WTC11 (cell line): ENCODE measurements at regions of chr7 and their contacts with region 1.

Region 1: GRCh38 chr7:149422129-149422913 is 38.5 kb downstream of the ZNF777 start:
- DNase-seq: peak; percentile 86
- ATAC-seq: peak; percentile 96
- H3K4me3 Mint-ChIP-seq: peak overlapping the region; percentile 79
- H3K27ac Mint-ChIP-seq: peak overlapping the region; percentile 89
- H3K4me1 Mint-ChIP-seq: peaks cover 11% of the 10 kb centered on the region
- H3K27me3 Mint-ChIP-seq: peaks cover 14% of the 10 kb centered on the region
- CTCF ChIP-seq: peak; percentile 44; the same call in 1 of the 2 replicates

Region 2: DNA sequence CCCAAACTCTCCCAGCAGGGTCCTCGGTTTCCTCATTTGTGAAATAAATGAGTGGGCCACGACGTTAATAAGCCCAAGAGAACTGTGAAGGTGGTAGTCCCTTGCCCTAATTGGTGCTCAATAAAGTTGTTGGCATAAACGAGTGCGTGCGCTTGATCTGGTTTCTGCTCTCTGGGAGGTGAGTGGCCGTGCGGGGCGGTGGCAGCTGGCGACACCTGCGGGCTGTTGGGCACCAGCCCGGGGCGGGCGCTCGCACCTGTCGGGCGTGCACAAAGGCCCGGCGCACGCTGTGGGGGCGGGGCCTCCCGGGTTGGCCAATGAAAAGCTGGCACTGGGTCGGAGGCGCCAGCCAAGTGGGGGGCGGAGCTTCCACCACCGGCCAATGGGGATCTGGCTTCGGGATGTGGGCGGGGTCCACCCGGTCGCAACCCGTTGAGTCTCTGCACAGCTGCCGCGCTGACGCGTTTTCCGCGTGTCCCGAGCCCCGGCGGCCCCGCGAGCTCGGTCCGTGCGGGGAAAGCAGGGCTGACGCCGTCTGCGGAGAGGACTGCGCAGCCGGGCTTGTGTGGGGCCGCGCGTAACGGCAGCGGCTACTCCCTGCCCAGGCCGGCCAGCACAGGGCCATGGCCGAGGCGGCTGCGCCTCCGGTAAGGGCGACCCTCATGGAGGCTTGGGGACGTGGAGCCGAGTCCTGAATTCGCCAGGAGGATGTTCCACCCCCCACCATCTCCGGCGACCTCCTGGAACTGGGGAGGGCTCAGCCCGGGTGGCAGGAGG is 137.3 kb before region 1 on chr7:
- CTCF ChIA-PET with region 1: interaction called, 11 read pairs
- POLR2A ChIA-PET with region 1: no interaction called
- DNase-seq: peak; percentile 99
- ATAC-seq: peak; percentile 96
- H3K4me3 Mint-ChIP-seq: peak overlapping the region; percentile 98
- H3K27ac Mint-ChIP-seq: peak overlapping the region; percentile 70; the same call in 1 of the 2 replicates
- H3K4me1 Mint-ChIP-seq: peaks cover 17% of the 10 kb centered on the region
- H3K27me3 Mint-ChIP-seq: peaks cover 27% of the 10 kb centered on the region
- CTCF ChIP-seq: no peak

Region 3: GRCh38 chr7:149409895-149410294 is 12.4 kb before region 1 on chr7:
- CTCF ChIA-PET with region 1: interaction called, 10 read pairs
- POLR2A ChIA-PET with region 1: no interaction called
- DNase-seq: no peak
- ATAC-seq: no peak
- H3K4me3 Mint-ChIP-seq: no peak overlapping the region
- H3K27ac Mint-ChIP-seq: no peak overlapping the region
- H3K4me1 Mint-ChIP-seq: peaks cover 8% of the 10 kb centered on the region
- H3K27me3 Mint-ChIP-seq: peaks cover 15% of the 10 kb centered on the region
- CTCF ChIP-seq: no peak

Region 4: DNA sequence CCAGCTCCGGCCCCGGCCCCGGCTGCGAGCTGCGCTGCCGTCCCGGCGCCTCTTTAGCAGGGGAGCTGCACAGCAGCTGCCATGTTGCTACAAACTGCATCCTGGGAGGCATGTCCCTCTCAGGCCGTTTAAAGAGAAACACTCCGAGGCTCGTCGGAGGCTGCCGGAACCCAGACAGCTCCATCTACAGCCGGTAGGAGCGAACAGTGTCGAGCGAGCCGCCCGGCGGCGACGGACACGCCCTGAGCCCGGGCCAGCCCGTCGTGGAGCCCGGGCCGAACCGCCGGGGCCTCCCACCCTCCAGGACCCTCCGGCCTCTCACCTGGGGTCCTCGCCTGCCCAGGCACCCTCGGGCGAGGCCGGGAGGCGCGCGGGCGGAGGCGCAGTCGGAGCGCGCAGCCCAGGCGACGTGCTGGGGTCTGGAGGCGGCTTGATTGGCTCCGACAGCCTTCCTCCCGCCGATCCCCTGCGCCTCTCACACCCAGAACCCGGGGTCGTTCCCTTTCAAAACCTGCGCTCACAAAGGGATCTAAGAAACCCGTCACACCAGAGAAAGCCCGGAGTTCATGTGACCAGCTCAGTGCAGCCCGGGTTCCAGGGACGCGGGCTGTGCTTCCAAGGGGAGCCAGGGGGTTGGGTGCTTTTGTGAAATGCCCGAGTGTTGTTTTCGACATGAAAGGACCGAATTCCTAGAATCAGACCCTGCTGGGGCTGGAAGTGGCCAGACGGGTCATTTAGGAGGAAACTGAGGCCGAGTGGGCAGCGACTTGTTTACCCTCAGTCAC is 38.4 kb after region 1 on chr7 and contains the start of gene ZNF777:
- CTCF ChIA-PET with region 1: interaction called, 30 read pairs
- POLR2A ChIA-PET with region 1: interaction called, 3 read pairs
- DNase-seq: peak; percentile 79
- ATAC-seq: peak; percentile 90
- H3K4me3 Mint-ChIP-seq: peak within 1 kb of the TSS; percentile 80
- H3K27ac Mint-ChIP-seq: peak within 1 kb of the TSS; percentile 65; the same call in 1 of the 2 replicates
- H3K4me1 Mint-ChIP-seq: peaks cover 17% of the 10 kb centered on the region
- H3K27me3 Mint-ChIP-seq: peaks cover 36% of the 10 kb centered on the region
- CTCF ChIP-seq: no peak
- total RNA-seq, gene ZNF777: 12.0 to 13.6 TPM (median 12.6 TPM) in 3 replicates

Region 5: DNA sequence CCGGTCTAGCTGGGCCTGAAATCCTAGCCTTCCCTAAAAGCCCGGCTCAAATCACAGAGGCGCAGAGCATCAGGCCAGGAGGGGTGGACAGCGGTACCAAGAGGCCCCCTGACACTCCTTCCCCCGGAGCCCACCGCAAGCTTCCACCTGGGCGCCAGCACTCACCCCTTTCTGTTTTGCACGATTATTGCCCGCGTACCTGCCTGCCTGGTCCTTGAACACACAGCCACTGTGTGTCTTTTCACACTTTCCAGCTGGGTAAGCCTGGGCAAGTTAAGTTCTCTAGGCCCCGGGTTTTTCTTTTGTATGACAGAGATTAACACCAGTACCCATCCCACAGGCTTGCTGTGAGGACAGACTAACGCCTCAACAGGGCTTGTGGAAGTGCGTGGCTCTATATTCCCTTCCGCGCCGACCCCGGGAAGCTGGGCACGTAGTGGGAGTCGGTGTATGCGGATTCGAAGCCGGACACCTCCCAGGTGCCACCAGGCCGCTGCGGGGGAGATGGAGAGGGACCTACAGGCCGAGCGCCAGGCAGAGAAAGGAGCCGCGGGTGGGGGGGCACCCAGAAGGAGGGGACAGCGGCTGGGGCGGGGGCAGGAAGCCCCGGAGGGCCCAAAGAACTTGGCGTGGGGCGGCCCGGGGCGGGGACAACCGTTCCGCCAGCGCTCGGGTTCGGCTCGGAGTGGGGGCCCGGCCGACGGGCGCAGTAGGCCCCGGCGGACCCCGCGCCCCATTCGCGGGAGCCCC is 74.5 kb after region 1 on chr7:
- CTCF ChIA-PET with region 1: interaction called, 15 read pairs
- POLR2A ChIA-PET with region 1: no interaction called
- DNase-seq: peak; percentile 27
- ATAC-seq: peak; percentile 10; the same call in 1 of the 2 replicates
- H3K4me3 Mint-ChIP-seq: peak overlapping the region; percentile 84
- H3K27ac Mint-ChIP-seq: no peak overlapping the region
- H3K4me1 Mint-ChIP-seq: peaks cover 12% of the 10 kb centered on the region
- H3K27me3 Mint-ChIP-seq: peaks cover 36% of the 10 kb centered on the region
- CTCF ChIP-seq: no peak